ENCODE measurements at regions of chr3 and their contacts with region 1.

Region 1: GRCh38 chr3:16264708-16265454 is at the starts of genes DPH3 and OXNAD1:
- DNase-seq: peak; percentile 99
- H3K4me3 Mint-ChIP-seq: peak within 1 kb of the TSS; percentile 97
- H3K27ac Mint-ChIP-seq: peak within 1 kb of the TSS; percentile 100
- H3K4me1 Mint-ChIP-seq: peaks cover 35% of the 10 kb centered on the region
- H3K27me3 Mint-ChIP-seq: no peaks in the 10 kb centered on the region
- total RNA-seq, gene DPH3: 28.1 and 36.6 TPM in 2 replicates
- total RNA-seq, gene OXNAD1: 29.5 and 31.1 TPM in 2 replicates

Region 2: GRCh38 chr3:14947886-14948555 is 1316.9 kb before region 1 on chr3:
- intact Hi-C with region 1: loop called (anchors 10 kb)
- DNase-seq: peak; percentile 95
- H3K4me3 Mint-ChIP-seq: peak overlapping the region; percentile 97
- H3K27ac Mint-ChIP-seq: peak overlapping the region; percentile 100
- H3K4me1 Mint-ChIP-seq: peaks cover 36% of the 10 kb centered on the region
- H3K27me3 Mint-ChIP-seq: no peaks in the 10 kb centered on the region

Region 3: DNA sequence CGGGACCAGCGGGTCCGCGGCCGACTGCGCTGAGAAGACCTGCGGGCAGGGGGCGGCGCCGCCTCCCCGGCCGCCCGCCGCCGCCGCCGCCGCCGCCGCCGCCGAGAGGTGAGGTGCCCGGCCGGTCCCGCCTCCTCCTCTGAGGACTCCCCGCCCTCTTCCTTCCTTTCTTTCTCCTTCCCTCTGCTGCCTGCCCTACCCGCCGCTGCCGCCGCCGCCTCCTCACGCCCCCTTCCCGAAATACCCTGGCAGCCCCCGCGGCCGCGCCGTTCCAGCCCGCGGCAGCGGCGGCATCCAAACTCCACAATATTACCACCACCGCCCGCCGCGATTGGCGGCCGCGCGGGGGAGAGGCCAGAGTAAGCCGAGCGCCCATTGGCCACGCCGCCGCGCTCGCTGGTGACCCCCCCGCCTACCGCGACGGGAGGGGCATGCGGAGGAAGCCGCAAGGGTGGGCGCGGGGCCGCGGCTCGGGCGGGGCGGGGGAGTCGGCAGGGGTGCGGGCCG is 405.3 kb before region 1 on chr3:
- intact Hi-C with region 1: loop called (anchors 5 kb)
- DNase-seq: peak; percentile 78
- H3K4me3 Mint-ChIP-seq: peak overlapping the region; percentile 92
- H3K27ac Mint-ChIP-seq: peak overlapping the region; percentile 91
- H3K4me1 Mint-ChIP-seq: peaks cover 33% of the 10 kb centered on the region
- H3K27me3 Mint-ChIP-seq: peaks cover 3% of the 10 kb centered on the region

Region 4: GRCh38 chr3:16012086-16012485 is 252.8 kb before region 1 on chr3:
- intact Hi-C with region 1: no loop called
- DNase-seq: no peak
- H3K4me3 Mint-ChIP-seq: no peak overlapping the region
- H3K27ac Mint-ChIP-seq: no peak overlapping the region
- H3K4me1 Mint-ChIP-seq: no peaks in the 10 kb centered on the region
- H3K27me3 Mint-ChIP-seq: peaks cover 5% of the 10 kb centered on the region

Region 5: GRCh38 chr3:16319307-16319706 is 54.4 kb after region 1 on chr3:
- intact Hi-C with region 1: loop called (anchors 1 kb)
- DNase-seq: peak; percentile 74
- H3K4me3 Mint-ChIP-seq: peak overlapping the region; percentile 6
- H3K27ac Mint-ChIP-seq: peak overlapping the region; percentile 89
- H3K4me1 Mint-ChIP-seq: peaks cover 71% of the 10 kb centered on the region
- H3K27me3 Mint-ChIP-seq: no peaks in the 10 kb centered on the region

Region 6: GRCh38 chr3:16550676-16551341 is 285.9 kb after region 1 on chr3:
- intact Hi-C with region 1: loop called (anchors 1 kb)
- DNase-seq: peak; percentile 67
- H3K4me3 Mint-ChIP-seq: no peak overlapping the region
- H3K27ac Mint-ChIP-seq: peak overlapping the region; percentile 71
- H3K4me1 Mint-ChIP-seq: peaks cover 27% of the 10 kb centered on the region
- H3K27me3 Mint-ChIP-seq: peaks cover 6% of the 10 kb centered on the region

Region 7: DNA sequence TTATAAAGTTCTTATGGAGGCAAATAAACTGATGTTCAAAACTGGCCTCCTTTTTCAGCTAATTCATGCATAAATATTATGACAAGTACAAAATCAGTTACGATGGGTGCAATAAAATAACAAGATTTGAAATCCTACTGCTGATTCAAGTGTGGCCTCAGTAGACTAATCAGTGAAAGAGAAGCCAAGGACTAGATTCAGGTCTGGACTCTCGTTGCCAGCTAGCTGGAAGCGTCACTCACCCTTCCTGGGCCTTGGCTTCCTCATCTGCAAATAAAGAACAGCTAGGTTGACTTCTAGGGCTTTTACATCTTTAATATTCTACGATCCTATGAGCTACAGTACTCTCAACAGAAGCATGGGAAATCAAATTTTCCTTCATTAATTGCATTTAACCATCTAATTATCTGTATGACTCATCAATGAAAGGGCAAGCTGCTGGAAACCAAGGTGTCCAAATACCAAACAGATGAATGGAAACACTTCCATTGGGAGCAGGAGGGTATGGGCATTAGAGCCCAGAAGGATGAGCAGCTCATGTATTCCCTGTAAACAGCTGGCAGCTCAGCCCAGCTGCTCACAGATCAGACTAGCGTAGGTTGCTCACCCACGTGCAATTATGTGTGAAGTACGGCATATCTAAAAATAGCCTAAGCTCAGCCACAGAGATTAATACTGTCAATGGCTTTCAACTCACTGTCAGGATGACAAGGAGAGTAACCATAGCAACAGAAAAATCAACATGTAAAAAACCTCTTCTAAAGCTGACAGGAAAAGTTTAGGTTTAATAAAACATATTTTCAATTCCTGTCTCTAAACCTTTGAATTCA is 914.7 kb after region 1 on chr3:
- intact Hi-C with region 1: loop called (anchors 1 kb)
- DNase-seq: no peak
- H3K4me3 Mint-ChIP-seq: no peak overlapping the region
- H3K27ac Mint-ChIP-seq: no peak overlapping the region
- H3K4me1 Mint-ChIP-seq: peaks cover 44% of the 10 kb centered on the region
- H3K27me3 Mint-ChIP-seq: peaks cover 12% of the 10 kb centered on the region

Region 8: GRCh38 chr3:17742108-17742879 is 1477.4 kb after region 1 on chr3 and contains the start of gene TBC1D5:
- intact Hi-C with region 1: loop called (anchors 10 kb)
- DNase-seq: peak; percentile 90
- H3K4me3 Mint-ChIP-seq: peak within 1 kb of the TSS; percentile 92
- H3K27ac Mint-ChIP-seq: peak within 1 kb of the TSS; percentile 97
- H3K4me1 Mint-ChIP-seq: peaks cover 56% of the 10 kb centered on the region
- H3K27me3 Mint-ChIP-seq: peaks cover 2% of the 10 kb centered on the region
- total RNA-seq, gene TBC1D5: 31.4 and 33.8 TPM in 2 replicates